ENCODE measurements at regions of chr5 and their contacts with region 1.

Region 1: GRCh38 chr5:60677844-60678664 is 21.9 kb downstream of the DEPDC1B start:
- DNase-seq: no peak

Region 2: GRCh38 chr5:60883229-60883628 is 205.2 kb after region 1 on chr5:
- intact Hi-C with region 1: loop called (anchors 5 kb)
- DNase-seq: no peak

Region 3: DNA sequence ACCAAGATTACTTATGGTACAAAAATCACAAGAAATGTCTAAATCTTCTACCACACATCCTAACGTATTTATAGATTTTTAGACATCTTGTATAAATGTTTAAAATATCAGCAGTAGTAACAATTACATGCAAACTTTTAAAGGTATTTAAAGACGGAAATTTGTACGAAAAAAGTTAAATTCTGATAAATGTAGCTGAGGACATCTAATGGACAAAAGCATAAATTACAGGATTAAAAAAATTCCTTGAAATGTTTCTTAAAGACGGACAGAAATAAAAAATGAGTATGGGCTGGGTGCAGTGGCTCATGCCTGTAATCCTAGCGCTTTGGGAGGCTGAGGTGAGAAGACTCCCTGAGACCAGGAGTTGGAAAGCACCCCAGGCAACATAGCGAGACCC is 251.0 kb after region 1 on chr5:
- intact Hi-C with region 1: loop called (anchors 10 kb)
- DNase-seq: no peak

Region 4: DNA sequence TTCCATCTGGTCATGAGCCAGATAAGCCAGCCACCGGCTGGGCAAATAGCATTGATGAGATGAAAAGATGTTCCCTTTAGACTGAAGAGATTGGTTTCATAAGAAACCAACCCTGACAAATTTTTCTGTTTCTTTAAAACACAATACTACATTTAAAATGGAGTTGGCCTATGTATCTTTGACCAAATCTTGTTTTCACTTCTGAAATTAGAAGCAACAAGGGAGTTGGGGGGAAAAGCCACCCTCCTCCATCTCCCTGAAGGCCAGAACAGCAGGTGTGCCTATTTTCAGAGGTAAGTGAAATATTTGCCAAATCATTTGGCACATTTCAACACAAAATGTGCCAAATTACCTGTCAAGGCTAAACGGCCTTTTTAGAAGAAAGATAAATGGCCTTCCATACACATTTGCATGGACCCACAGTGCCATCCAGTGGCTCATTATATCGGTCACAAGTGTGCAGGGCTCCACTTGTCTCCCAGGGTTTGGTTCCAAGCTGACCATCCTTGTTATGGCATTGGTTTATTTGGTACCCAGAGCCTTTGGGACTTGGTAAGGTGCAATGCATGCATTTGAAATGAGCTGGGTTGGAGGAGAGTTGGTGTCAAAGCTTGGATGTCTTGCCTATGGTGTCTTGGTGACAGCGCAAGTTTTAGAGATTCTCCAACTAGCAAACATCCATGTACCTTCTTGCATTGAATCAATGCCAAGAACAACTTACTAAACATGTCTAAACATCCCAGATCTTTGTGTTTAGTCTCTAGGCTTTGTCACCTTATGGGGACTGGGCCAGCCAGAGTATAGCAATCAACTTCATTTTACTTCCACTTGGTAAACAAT is 1256.0 kb after region 1 on chr5:
- intact Hi-C with region 1: loop called (anchors 10 kb)
- DNase-seq: peak in 9 of 10 donors; percentile 13 to 91 (median 64)